Activated naive CD4-positive, alpha-beta T cell treated with anti-CD3 and anti-CD28 coated beads for 36 hours (primary cell): ENCODE measurements at regions of chr4 and their contacts with region 1.

Region 1: DNA sequence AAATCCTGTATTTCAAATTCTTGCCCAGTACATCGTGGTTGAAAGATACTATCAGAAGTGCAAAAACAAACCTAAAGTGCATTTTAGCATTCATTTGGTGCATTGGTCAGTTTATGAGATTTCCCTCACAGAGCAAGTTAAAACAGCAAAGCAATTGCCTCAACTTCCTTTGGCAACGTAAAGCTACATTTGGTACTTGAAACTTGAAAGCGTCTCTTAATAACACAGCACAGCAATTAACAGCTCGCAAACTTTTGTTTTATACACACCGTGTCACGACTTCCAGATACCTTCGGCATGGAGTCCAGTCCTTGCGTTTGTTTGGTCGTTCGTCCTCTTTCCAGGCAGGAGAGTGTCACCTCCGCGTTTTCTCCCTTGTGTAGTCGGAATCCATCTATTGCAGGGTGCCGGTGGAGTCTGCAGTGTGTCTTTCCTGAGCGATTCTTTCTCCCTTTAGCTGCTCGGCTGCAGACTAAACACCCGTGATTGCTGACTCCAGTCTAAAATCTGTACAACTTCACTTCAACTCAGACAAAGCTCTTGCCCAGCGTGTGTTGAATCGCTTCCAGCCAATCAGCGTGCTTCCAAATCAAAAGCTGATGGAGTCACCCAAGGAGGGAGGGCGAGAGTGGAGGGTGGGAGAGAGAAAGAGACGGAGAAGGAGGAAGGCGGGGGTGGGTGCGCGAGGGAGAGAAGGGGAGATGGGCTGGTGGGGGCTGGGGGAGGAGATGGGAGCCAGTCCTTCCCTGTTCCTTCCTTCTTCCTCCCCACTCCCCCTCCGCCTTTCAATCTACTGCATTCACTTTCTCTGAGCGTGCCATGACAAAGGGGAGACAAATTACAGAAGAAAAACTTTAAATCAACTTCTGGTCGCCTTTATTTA is at the start of gene PCDH18:
- DNase-seq: peak; percentile 38
- H3K4me3 Mint-ChIP-seq: no peak within 1 kb of the TSS
- H3K27ac Mint-ChIP-seq: no peak within 1 kb of the TSS
- H3K4me1 Mint-ChIP-seq: peaks cover 3% of the 10 kb centered on the region
- H3K27me3 Mint-ChIP-seq: no peaks in the 10 kb centered on the region
- total RNA-seq, gene PCDH18: 0.05 TPM in 1 of 2 experiments, not detected in the other

Region 2: DNA sequence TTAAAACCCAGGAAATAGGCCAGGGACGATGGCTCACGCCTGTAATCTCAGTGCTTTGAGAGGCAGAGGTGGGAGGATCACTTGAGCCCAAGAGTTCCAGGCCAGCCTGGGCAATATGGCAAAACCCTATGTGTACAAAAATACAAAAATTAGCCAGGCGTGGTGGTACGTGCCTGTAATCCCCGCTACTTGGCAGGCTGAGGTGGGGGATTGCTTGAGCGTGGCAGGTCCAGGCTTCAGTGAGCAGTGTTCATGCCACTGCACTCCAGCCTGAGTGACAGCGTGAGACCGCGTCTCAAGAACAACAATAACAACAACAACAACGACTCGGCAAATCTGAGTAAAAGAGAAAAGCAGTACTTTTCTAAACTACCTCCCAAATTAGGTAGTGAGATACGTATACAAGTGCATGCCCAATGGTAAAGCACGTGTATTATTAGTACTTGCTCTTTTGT is 1783.0 kb after region 1 on chr4:
- CTCF ChIA-PET with region 1: no interaction called
- intact Hi-C with region 1: loop called (anchors 10 kb)
- DNase-seq: no peak
- H3K4me3 Mint-ChIP-seq: no peak overlapping the region
- H3K27ac Mint-ChIP-seq: no peak overlapping the region
- H3K4me1 Mint-ChIP-seq: peaks cover 74% of the 10 kb centered on the region
- H3K27me3 Mint-ChIP-seq: no peaks in the 10 kb centered on the region